ENCODE measurements at regions of chr12 and their contacts with region 1.

Region 1: DNA sequence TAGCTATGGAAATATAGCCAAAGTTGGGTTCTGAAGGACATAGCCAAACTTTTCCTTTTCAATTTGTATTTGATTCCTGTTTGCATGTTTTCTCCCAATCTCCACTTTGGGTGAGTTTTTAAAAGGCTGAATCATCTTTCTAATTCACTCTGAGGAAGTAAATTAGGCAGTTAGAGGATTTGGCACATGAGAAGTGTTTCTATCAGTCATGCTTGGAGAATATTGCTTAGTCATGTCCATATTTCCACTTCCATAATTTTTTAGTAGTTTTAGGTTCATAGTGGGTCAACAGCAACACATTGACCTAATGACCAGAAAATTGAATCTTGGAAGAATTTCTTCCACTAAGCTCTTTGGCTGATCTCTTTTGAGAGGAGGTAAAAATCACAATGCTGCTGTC is 21.8 kb downstream of the IRAK3 start:
- DNase-seq: no peak
- H3K4me3 ChIP-seq: no peak overlapping the region
- CTCF ChIP-seq: no peak
- POLR2A ChIP-seq: no peak

Region 2: GRCh38 chr12:65977384-65977783 is 233.5 kb before region 1 on chr12:
- intact Hi-C with region 1: loop called (anchors 10 kb)
- DNase-seq: no peak
- H3K4me3 ChIP-seq: no peak overlapping the region
- CTCF ChIP-seq: no peak
- POLR2A ChIP-seq: no peak

Measured in lower leg skin (tissue), 4 donors.